ENCODE measurements at regions of chr15 and their contacts with region 1.

Region 1: DNA sequence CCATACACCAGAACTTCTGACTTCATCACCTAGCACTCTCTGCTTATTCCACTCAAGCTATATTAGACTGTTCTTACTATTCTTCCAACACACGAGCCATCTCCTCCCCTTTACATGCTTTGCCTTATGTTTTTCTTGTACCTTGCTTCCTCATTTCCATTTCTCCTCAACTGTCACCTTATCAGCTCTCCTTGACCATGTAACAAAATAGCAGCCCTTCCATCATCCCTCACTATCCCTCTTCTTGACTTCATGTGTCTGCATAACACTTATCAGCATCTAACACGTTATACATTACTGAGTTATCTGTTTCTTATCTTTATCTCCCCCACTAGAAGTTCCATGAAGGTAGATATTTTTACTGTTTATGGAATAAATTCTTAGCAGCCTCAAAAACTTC is 45.3 kb downstream of the TRPM7 start:
- DNase-seq: no peak
- ATAC-seq: no peak

Region 2: DNA sequence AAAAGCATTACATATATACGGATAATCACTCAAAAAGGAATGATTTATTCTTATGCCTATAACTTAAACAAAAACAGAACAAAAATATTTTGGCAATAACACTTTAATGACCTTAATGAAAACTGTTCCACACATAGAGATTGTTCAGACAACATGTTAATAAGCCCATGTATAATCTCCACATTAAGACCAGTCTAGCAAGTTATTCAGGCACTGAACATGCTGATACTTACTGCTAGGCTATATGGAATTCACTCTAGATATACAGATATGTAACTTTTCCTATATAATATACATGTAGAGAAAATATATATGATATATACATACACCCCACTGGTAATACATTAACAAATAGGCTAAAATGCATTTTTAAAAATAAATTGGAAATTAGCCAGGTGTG is 51.0 kb before region 1 on chr15:
- intact Hi-C with region 1: loop called (anchors 10 kb)
- DNase-seq: no peak
- ATAC-seq: no peak

Region 3: GRCh38 chr15:50718700-50719125 is 77.4 kb after region 1 on chr15:
- intact Hi-C with region 1: no loop called
- DNase-seq: no peak
- ATAC-seq: no peak